Ovary (tissue), 10 donors: ENCODE measurements at regions of chr17 and their contacts with region 1.

Region 1: DNA sequence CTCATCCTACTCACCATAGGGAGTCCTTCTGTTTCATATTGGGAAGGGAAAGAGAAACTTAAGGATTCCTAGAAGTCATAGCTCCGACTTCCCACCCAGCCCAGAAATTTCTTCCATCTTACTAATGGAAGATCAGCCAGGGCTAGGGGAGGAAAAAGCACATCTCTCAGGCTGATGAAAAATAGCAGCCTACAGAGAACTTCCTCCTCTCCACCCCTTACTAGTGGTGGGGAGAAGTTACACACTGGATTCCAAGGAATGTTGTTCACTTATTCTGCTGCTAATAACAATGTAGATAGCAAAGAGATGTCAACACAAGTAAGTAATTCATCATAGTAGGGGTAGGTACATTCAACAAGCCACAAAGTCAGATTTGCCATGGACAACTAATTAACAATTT is 94.4 kb downstream of the SPACA3 start:
- DNase-seq: no peak
- H3K4me3 ChIP-seq: no peak overlapping the region
- H3K27ac ChIP-seq: no peak overlapping the region
- H3K4me1 ChIP-seq: no peaks in the 10 kb centered on the region
- H3K27me3 ChIP-seq: no peaks in the 10 kb centered on the region
- CTCF ChIP-seq: no peak
- EP300 ChIP-seq: no peak
- POLR2A ChIP-seq: no peak

Region 2: GRCh38 chr17:33021731-33022408 is 64.2 kb before region 1 on chr17:
- intact Hi-C with region 1: loop called in 1 of 4 experiments (anchors 10 kb)
- DNase-seq: no peak
- H3K4me3 ChIP-seq: no peak overlapping the region
- H3K27ac ChIP-seq: no peak overlapping the region
- H3K4me1 ChIP-seq: no peaks in the 10 kb centered on the region
- H3K27me3 ChIP-seq: no peaks in the 10 kb centered on the region
- CTCF ChIP-seq: no peak
- EP300 ChIP-seq: no peak
- POLR2A ChIP-seq: no peak

Region 3: GRCh38 chr17:33200587-33200986 is 114.5 kb after region 1 on chr17:
- intact Hi-C with region 1: no loop called
- DNase-seq: no peak
- H3K4me3 ChIP-seq: no peak overlapping the region
- H3K27ac ChIP-seq: no peak overlapping the region
- H3K4me1 ChIP-seq: no peaks in the 10 kb centered on the region
- H3K27me3 ChIP-seq: no peaks in the 10 kb centered on the region
- CTCF ChIP-seq: no peak
- EP300 ChIP-seq: no peak
- POLR2A ChIP-seq: no peak